ENCODE measurements at regions of chr1 and their contacts with region 1.

Region 1: GRCh38 chr1:25695090-25695770 is 78.6 kb downstream of the MAN1C1 start:
- DNase-seq: peak; percentile 75 to 82
- ATAC-seq: peak; percentile 76 to 90 (median 86)
- H3K4me3 ChIP-seq: no peak overlapping the region
- H3K27ac ChIP-seq: peak overlapping the region in 9 of 10 donors; percentile 76 to 96 (median 90)
- H3K4me1 ChIP-seq: peaks cover 7 to 80% (median 57%) of the 10 kb centered on the region in 9 donors
- H3K27me3 ChIP-seq: no peaks in the 10 kb centered on the region
- CTCF ChIP-seq: peak in 7 of 9 donors; percentile 17 to 56 (median 38)

Region 2: DNA sequence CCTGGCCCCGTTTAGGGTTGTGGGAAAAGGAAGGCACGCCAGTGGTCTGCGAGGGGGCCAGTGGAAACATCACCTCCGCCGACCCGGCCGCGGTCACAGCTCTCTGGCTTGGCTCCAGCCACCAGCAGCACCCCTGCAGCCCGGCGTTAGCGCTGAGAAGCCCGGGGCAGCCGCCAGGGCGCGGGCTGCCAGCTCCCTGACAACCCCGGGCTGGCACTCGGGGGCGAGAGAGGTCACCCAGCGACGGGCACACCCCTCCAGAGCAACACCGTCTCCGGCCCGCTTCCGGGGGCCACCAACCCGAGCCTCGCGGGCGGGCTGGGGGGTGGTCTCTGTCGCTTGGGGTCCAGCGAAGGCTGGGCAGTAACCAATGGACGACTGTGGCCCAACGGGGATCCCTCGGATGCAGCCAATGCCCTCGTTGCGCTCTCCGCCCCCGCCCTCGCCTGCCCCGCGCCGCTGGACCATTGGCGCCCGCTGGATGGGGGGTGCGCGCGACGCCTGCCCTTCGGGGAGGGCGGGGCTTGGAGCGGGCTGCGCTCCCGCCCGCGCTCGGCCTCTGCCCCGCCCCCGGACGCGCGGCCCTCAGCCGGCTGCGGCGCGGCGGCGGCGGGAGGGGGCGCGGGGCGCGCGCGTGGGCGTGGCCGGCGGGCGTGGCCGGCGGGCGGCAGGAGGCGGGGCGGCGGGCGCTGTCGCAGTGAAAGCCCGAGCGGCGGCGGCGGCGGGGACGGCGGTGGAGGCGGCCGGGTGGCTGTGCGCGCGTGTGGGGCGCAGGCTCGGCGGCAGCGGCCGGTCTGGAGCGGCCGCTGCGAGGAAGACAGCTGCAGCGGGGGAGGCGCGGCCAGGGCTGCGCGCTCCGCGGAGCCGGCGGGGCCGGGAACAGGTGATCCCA is 78.9 kb before region 1 on chr1 and contains the start of gene MAN1C1:
- intact Hi-C with region 1: loop called in 7 of 10 experiments (anchors 1 to 5 kb)
- DNase-seq: peak; percentile 90 to 92
- ATAC-seq: peak; percentile 90 to 94 (median 93)
- H3K4me3 ChIP-seq: peak within 1 kb of the TSS; percentile 78 to 100 (median 90)
- H3K27ac ChIP-seq: peak within 1 kb of the TSS; percentile 78 to 92 (median 88)
- H3K4me1 ChIP-seq: peaks cover 11 to 55% (median 43%) of the 10 kb centered on the region in 9 donors
- H3K27me3 ChIP-seq: peaks cover 0 to 10% (median 0%) of the 10 kb centered on the region in 7 donors
- CTCF ChIP-seq: peak; percentile 18 to 71 (median 45)
- total RNA-seq, gene MAN1C1: 9.7 to 23.4 (median 14.2) TPM

Region 3: GRCh38 chr1:25727635-25728330 is 32.6 kb after region 1 on chr1:
- intact Hi-C with region 1: loop called in 1 of 10 experiments (anchors 2 kb)
- DNase-seq: peak; percentile 71 to 80
- ATAC-seq: peak; percentile 82 to 93 (median 90)
- H3K4me3 ChIP-seq: peak overlapping the region in 2 of 10 donors; percentile 7 to 16
- H3K27ac ChIP-seq: peak overlapping the region in 9 of 10 donors; percentile 72 to 85 (median 77)
- H3K4me1 ChIP-seq: peaks cover 11 to 55% (median 40%) of the 10 kb centered on the region in 9 donors
- H3K27me3 ChIP-seq: no peaks in the 10 kb centered on the region
- CTCF ChIP-seq: no peak

Region 4: GRCh38 chr1:25743826-25744581 is 48.8 kb after region 1 on chr1:
- intact Hi-C with region 1: loop called in 6 of 10 experiments (anchors 2 to 5 kb)
- DNase-seq: peak; percentile 68 to 78
- ATAC-seq: peak; percentile 71 to 91 (median 88)
- H3K4me3 ChIP-seq: peak overlapping the region in 2 of 10 donors; percentile 4 to 11
- H3K27ac ChIP-seq: peak overlapping the region; percentile 69 to 95 (median 90)
- H3K4me1 ChIP-seq: peaks cover 12 to 47% (median 33%) of the 10 kb centered on the region in 9 donors
- H3K27me3 ChIP-seq: no peaks in the 10 kb centered on the region
- CTCF ChIP-seq: peak; percentile 9 to 74 (median 49)